Activated CD4-positive, alpha-beta memory T cell treated with anti-CD3 and anti-CD28 coated beads, Interleukin-2, amount 10 ng/mL, durations not matched to agents 7 days and 5 days (primary cell): ENCODE measurements at regions of chr11 and their contacts with region 1.

Region 1: GRCh38 chr11:9259981-9260837 is 4.9 kb downstream of the DENND5A start:
- DNase-seq: no peak
- H3K4me3 Mint-ChIP-seq: no peak overlapping the region
- H3K27ac Mint-ChIP-seq: no peak overlapping the region
- H3K4me1 Mint-ChIP-seq: peaks cover 33% of the 10 kb centered on the region
- H3K27me3 Mint-ChIP-seq: peaks cover 30% of the 10 kb centered on the region

Region 2: GRCh38 chr11:9250139-9250582 is 10.0 kb before region 1 on chr11:
- CTCF ChIA-PET with region 1: interaction called, 9 read pairs
- POLR2A ChIA-PET with region 1: interaction called, 15 read pairs
- DNase-seq: peak; percentile 48
- H3K4me3 Mint-ChIP-seq: peak overlapping the region; percentile 16
- H3K27ac Mint-ChIP-seq: peak overlapping the region; percentile 47
- H3K4me1 Mint-ChIP-seq: peaks cover 53% of the 10 kb centered on the region
- H3K27me3 Mint-ChIP-seq: peaks cover 4% of the 10 kb centered on the region